ENCODE measurements at regions of chr17 and their contacts with region 1.

Region 1: GRCh38 chr17:78360371-78361224 is 721 bp upstream of the SOCS3 start:
- DNase-seq: peak; percentile 80 to 87 (median 83)
- H3K4me3 ChIP-seq: peak overlapping the region; percentile 61 to 62
- H3K4me3 Mint-ChIP-seq: peak overlapping the region; percentile 85 to 98 (median 88)
- H3K27ac ChIP-seq: peak overlapping the region; percentile 61
- H3K27ac Mint-ChIP-seq: peak overlapping the region; percentile 88 to 96 (median 95)
- H3K4me1 ChIP-seq: peaks cover 32% of the 10 kb centered on the region
- H3K4me1 Mint-ChIP-seq: peaks cover 15 to 41% (median 26%) of the 10 kb centered on the region in 4 donors
- H3K27me3 ChIP-seq: no peaks in the 10 kb centered on the region
- H3K27me3 Mint-ChIP-seq: no peaks in the 10 kb centered on the region

Region 2: DNA sequence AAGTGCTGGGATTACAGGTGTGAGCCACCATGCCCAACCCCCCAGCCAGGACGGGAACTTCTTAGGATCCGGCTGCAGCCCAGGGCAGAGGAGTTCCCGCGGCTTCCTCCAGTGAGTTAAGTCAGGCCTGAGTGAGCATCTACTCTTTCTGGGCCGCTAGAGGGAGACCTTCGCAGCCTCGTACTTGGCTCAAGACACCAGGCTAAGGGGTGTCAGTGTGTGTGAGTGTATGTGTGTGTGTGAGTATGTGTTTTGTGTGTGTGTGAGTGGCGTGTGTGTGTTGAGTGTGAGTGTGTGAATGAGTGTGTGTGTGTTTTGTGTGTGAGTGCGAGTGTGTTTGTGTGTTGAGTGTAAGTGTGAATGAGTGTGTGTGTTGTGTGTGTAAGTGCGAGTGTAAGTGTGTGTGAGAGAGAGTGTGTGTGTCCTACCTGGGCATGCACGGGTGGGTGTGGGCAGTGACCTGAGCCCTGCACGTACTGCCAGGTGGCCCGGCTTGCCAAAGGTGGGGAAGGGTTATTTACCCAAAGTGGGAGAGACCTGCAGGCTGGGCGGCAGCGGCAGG is 70.7 kb before region 1 on chr17:
- CTCF ChIA-PET with region 1: interaction called, 41 read pairs
- POLR2A ChIA-PET with region 1: interaction called, 6 read pairs
- intact Hi-C with region 1: loop called (anchors 1 kb)
- DNase-seq: peak; percentile 72 to 78 (median 74)
- H3K4me3 ChIP-seq: no peak overlapping the region
- H3K4me3 Mint-ChIP-seq: no peak overlapping the region
- H3K27ac ChIP-seq: no peak overlapping the region
- H3K27ac Mint-ChIP-seq: no peak overlapping the region
- H3K4me1 ChIP-seq: peaks cover 8% of the 10 kb centered on the region
- H3K4me1 Mint-ChIP-seq: peaks cover 0 to 7% (median 1%) of the 10 kb centered on the region in 4 donors
- H3K27me3 ChIP-seq: no peaks in the 10 kb centered on the region
- H3K27me3 Mint-ChIP-seq: no peaks in the 10 kb centered on the region

Region 3: GRCh38 chr17:78313735-78314648 is 46.6 kb before region 1 on chr17:
- CTCF ChIA-PET with region 1: interaction called, 5 read pairs
- POLR2A ChIA-PET with region 1: interaction called, 62 read pairs
- intact Hi-C with region 1: loop called (anchors 1 kb)
- DNase-seq: peak; percentile 68 to 71 (median 70)
- H3K4me3 ChIP-seq: peak overlapping the region in 1 of 2 donors; percentile 50
- H3K4me3 Mint-ChIP-seq: peak overlapping the region; percentile 73 to 91 (median 79)
- H3K27ac ChIP-seq: peak overlapping the region; percentile 18
- H3K27ac Mint-ChIP-seq: peak overlapping the region in 6 of 7 donors; percentile 11 to 94 (median 81)
- H3K4me1 ChIP-seq: peaks cover 44% of the 10 kb centered on the region
- H3K4me1 Mint-ChIP-seq: peaks cover 18 to 56% (median 38%) of the 10 kb centered on the region in 4 donors
- H3K27me3 ChIP-seq: no peaks in the 10 kb centered on the region
- H3K27me3 Mint-ChIP-seq: no peaks in the 10 kb centered on the region

Region 4: DNA sequence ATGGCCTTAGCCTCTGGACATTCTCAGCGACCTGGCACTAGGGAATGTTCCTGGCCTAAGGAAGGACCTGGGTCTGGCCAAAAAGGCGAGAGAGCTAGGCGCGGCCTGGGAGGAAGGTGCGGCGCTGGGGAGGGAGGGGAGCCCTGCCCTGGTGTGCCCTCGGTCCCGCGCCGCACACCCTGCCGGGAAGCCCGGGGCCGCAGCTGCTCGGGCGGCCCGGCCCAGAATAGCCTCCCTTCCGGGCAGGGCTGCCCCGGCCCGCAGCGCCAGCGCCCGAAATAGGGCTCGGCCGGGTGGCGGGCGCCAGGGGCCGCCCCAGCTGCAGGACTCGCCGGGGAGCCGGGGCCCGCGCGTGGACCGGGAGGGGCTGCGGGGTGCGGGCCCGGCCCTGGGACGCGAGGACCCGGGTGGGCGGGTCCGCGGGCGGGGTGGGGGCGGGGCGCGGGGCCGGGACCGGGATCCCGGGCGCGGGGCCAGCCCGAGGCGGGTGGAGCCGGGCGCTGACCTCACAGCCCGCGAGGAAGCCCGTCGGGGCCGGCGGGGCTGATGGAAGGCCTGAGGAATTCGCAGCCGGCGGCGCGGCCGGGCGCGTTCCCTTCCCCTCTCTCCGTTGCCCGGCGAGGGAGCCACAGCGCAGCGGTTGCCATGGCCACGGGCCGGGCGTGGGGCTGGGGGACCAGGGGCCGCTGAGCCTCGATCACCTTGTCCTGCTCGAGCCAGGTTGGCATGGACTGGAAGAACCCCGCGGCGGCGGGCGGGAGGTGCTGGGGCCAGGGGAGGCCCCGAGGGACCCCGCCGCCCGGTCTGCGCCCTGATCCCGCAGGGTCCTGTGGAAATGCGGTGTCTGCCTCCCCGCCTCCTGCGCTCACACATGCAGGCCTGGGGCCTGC is 18.8 kb before region 1 on chr17:
- CTCF ChIA-PET with region 1: interaction called, 134 read pairs
- POLR2A ChIA-PET with region 1: no interaction called
- intact Hi-C with region 1: loop called (anchors 1 kb)
- DNase-seq: no peak
- H3K4me3 ChIP-seq: no peak overlapping the region
- H3K4me3 Mint-ChIP-seq: peak overlapping the region in 3 of 8 donors; percentile 12 to 70 (median 67)
- H3K27ac ChIP-seq: peak overlapping the region; percentile 61
- H3K27ac Mint-ChIP-seq: peak overlapping the region in 4 of 7 donors; percentile 27 to 98 (median 66)
- H3K4me1 ChIP-seq: peaks cover 83% of the 10 kb centered on the region
- H3K4me1 Mint-ChIP-seq: peaks cover 55 to 88% (median 68%) of the 10 kb centered on the region in 4 donors
- H3K27me3 ChIP-seq: no peaks in the 10 kb centered on the region
- H3K27me3 Mint-ChIP-seq: no peaks in the 10 kb centered on the region

Region 5: DNA sequence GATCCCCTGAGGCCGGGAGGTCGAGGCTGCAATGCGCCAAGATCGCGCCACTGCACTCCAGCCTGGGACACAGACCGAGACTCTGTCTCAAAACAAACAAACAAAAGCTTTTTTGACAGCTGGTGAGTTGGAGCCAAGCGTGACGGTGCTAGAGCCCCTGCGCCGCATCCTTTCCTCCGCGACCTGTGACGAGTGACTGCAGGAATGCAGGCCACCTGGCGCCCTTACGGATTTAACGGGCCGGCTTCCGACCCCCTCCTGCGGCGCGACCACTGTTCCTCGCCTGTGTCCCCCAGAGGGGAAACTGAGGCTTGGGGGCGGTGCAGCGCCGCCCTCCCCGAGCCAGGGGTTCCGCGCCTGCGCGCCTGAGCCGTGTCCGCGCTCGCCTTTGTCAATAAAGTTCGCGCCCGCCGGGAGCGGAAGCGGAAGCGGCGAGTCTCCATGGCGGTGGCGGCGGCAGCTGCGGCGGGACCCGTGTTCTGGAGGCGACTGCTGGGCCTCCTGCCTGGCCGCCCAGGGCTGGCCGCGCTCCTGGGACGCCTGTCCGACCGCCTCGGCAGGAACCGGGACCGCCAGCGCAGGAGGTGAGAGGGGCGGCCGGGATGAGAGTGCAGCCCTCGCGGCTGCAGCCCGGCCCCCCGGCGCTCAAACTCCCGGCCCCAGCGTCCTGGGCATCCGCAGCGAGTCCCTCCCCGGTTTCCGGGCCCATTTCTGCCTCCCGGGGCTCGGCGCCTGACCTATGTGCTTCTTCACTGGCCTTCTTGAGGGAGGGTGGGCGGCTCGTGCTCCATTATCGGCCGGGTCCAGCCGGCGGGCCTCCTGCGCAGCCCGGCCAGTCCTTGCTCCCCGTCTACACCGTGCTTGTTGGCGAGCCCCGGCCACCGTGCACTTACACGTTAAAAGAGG is 17.9 kb after region 1 on chr17 and contains the start of gene PGS1:
- CTCF ChIA-PET with region 1: interaction called, 8 read pairs
- POLR2A ChIA-PET with region 1: interaction called, 28 read pairs
- intact Hi-C with region 1: loop called (anchors 2 kb)
- DNase-seq: peak; percentile 79 to 88 (median 84)
- H3K4me3 ChIP-seq: peak within 1 kb of the TSS; percentile 63 to 69
- H3K4me3 Mint-ChIP-seq: peak within 1 kb of the TSS; percentile 74 to 96 (median 94)
- H3K27ac ChIP-seq: peak within 1 kb of the TSS; percentile 77
- H3K27ac Mint-ChIP-seq: peak within 1 kb of the TSS; percentile 84 to 96 (median 93)
- H3K4me1 ChIP-seq: peaks cover 51% of the 10 kb centered on the region
- H3K4me1 Mint-ChIP-seq: peaks cover 30 to 49% (median 38%) of the 10 kb centered on the region in 4 donors
- H3K27me3 ChIP-seq: no peaks in the 10 kb centered on the region
- H3K27me3 Mint-ChIP-seq: peaks cover 0 to 2% of the 10 kb centered on the region in 2 donors
- total RNA-seq, gene PGS1: 84.4 to 84.8 TPM

Region 6: GRCh38 chr17:78383725-78384471 is 23.3 kb after region 1 on chr17:
- CTCF ChIA-PET with region 1: interaction called, 5 read pairs
- POLR2A ChIA-PET with region 1: interaction called, 28 read pairs
- intact Hi-C with region 1: loop called (anchors 2 kb)
- DNase-seq: peak in 1 of 5 donors; percentile 49
- H3K4me3 ChIP-seq: peak overlapping the region; percentile 17 to 24
- H3K4me3 Mint-ChIP-seq: peak overlapping the region; percentile 59 to 91 (median 73)
- H3K27ac ChIP-seq: peak overlapping the region; percentile 40
- H3K27ac Mint-ChIP-seq: peak overlapping the region; percentile 85 to 96 (median 94)
- H3K4me1 ChIP-seq: peaks cover 97% of the 10 kb centered on the region
- H3K4me1 Mint-ChIP-seq: peaks cover 65 to 95% (median 83%) of the 10 kb centered on the region in 4 donors
- H3K27me3 ChIP-seq: no peaks in the 10 kb centered on the region
- H3K27me3 Mint-ChIP-seq: no peaks in the 10 kb centered on the region

Region 7: GRCh38 chr17:78421484-78422266 is 61.1 kb after region 1 on chr17:
- CTCF ChIA-PET with region 1: interaction called, 81 read pairs
- POLR2A ChIA-PET with region 1: interaction called, 12 read pairs
- intact Hi-C with region 1: loop called (anchors 1 kb)
- DNase-seq: peak; percentile 63 to 74 (median 64)
- H3K4me3 ChIP-seq: no peak overlapping the region
- H3K4me3 Mint-ChIP-seq: no peak overlapping the region
- H3K27ac ChIP-seq: no peak overlapping the region
- H3K27ac Mint-ChIP-seq: peak overlapping the region in 6 of 7 donors; percentile 12 to 79 (median 54)
- H3K4me1 ChIP-seq: peaks cover 9% of the 10 kb centered on the region
- H3K4me1 Mint-ChIP-seq: peaks cover 10 to 22% (median 14%) of the 10 kb centered on the region in 4 donors
- H3K27me3 ChIP-seq: no peaks in the 10 kb centered on the region
- H3K27me3 Mint-ChIP-seq: no peaks in the 10 kb centered on the region

Measured in CD4-positive, alpha-beta memory T cell (primary cell).